Tibial artery (tissue), 4 donors: ENCODE measurements at regions of chr1 and their contacts with region 1.

Region 1: GRCh38 chr1:95512925-95513324 is 278.9 kb downstream of the RWDD3 start:
- DNase-seq: no peak
- H3K4me3 ChIP-seq: no peak overlapping the region
- H3K27ac ChIP-seq: no peak overlapping the region
- H3K4me1 ChIP-seq: no peaks in the 10 kb centered on the region
- H3K27me3 ChIP-seq: no peaks in the 10 kb centered on the region
- CTCF ChIP-seq: no peak

Region 2: GRCh38 chr1:95332754-95333153 is 180.2 kb before region 1 on chr1:
- intact Hi-C with region 1: no loop called
- DNase-seq: no peak
- H3K4me3 ChIP-seq: no peak overlapping the region
- H3K27ac ChIP-seq: no peak overlapping the region
- H3K4me1 ChIP-seq: no peaks in the 10 kb centered on the region
- H3K27me3 ChIP-seq: no peaks in the 10 kb centered on the region
- CTCF ChIP-seq: no peak

Region 3: DNA sequence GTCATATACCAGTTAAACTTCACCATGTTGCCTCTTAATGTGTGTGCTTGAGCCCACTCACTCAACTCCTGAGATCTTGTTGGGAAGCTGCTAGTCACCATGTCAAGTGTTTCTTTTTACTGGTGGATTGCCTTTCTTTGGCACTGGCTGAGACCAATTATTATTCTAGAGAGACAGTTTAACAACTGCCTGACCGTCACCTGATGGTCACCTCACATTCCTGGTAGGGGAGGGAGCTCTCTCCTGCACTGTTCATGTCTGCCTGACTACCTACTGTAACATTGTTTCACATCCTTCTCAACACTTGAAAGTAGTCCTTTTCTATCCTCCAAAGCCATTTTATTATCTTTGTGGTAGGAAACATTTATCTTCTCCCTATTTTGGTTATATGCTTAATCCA is 106.6 kb before region 1 on chr1:
- intact Hi-C with region 1: no loop called
- DNase-seq: no peak
- H3K4me3 ChIP-seq: no peak overlapping the region
- H3K27ac ChIP-seq: no peak overlapping the region
- H3K4me1 ChIP-seq: peaks cover 0 to 5% (median 0%) of the 10 kb centered on the region in 4 donors
- H3K27me3 ChIP-seq: no peaks in the 10 kb centered on the region
- CTCF ChIP-seq: no peak

Region 4: DNA sequence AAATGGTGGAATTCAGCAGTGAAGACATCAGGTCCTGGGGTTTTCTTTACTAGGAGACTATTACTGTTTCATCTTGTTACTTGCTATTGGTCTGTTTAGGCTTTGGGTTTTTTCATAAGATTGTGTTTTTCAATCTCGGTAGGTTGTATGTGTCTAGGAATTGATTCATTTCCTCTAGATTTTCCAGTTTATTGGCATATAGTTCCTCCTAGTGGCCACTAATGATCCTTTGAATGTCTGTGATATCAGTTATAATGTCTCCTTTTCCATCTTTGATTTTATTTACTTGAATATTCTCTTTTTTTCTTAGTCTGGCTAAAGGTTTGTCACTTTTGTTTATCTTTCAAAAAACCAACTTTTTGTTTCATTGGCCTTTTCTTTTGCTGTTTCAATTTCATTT is 45.9 kb before region 1 on chr1:
- intact Hi-C with region 1: loop called (anchors 1 kb)
- DNase-seq: no peak
- H3K4me3 ChIP-seq: no peak overlapping the region
- H3K27ac ChIP-seq: no peak overlapping the region
- H3K4me1 ChIP-seq: no peaks in the 10 kb centered on the region
- H3K27me3 ChIP-seq: no peaks in the 10 kb centered on the region
- CTCF ChIP-seq: no peak

Region 5: DNA sequence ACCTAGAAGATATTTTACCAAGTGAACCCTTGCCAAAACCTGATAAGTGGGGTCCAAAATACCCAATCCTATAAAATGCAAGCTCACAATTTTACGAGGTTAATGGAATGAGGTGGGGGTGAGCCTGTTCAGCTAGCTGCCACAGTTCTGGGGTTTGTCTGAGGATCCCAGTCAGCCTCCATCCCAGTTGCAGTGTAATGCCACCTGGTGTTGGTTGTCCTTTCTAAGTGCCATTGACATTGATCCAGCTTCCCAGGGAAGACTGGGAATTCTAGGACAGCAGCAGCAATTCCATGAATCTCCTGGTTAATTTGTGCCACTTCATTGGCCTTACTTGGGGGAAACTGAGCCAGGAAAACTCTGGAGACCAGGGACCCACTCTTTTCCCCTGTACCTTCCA is 19.4 kb after region 1 on chr1:
- intact Hi-C with region 1: no loop called
- DNase-seq: no peak
- H3K4me3 ChIP-seq: no peak overlapping the region
- H3K27ac ChIP-seq: no peak overlapping the region
- H3K4me1 ChIP-seq: peaks cover 0 to 12% (median 5%) of the 10 kb centered on the region in 4 donors
- H3K27me3 ChIP-seq: no peaks in the 10 kb centered on the region
- CTCF ChIP-seq: no peak

Region 6: DNA sequence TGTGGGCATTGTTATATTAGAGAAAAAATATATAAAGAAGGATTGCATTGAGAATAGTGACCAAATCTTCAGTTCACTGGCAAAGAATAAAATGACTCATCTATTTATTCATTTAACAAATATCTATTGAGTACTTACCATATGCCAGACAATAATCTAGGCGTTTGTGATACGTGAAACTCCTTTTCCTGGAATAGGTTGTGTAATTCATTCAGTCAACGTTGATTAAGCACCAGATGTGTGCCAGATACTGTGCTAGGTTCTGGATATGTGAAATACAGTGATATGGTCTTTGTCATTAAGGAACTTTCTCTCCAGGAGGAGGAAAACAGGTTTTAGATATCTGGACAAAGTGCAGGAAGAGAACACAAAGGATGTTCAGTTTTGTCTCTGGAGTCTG is 65.5 kb after region 1 on chr1:
- intact Hi-C with region 1: no loop called
- DNase-seq: no peak
- H3K4me3 ChIP-seq: no peak overlapping the region
- H3K27ac ChIP-seq: no peak overlapping the region
- H3K4me1 ChIP-seq: no peaks in the 10 kb centered on the region
- H3K27me3 ChIP-seq: no peaks in the 10 kb centered on the region
- CTCF ChIP-seq: no peak